Caco-2 (cell line): ENCODE measurements at regions of chr4 and their contacts with region 1.

Region 1: GRCh38 chr4:73341454-73341853 is 62.6 kb upstream of the ALB start:
- DNase-seq: peak; percentile 61 to 70
- H3K4me3 ChIP-seq: no peak overlapping the region
- H3K4me3 Mint-ChIP-seq: no peak overlapping the region
- H3K27ac Mint-ChIP-seq: no peak overlapping the region
- H3K4me1 ChIP-seq: peaks cover 22% of the 10 kb centered on the region
- H3K4me1 Mint-ChIP-seq: peaks cover 23% of the 10 kb centered on the region
- H3K27me3 ChIP-seq: no peaks in the 10 kb centered on the region
- H3K27me3 Mint-ChIP-seq: no peaks in the 10 kb centered on the region
- CTCF ChIP-seq: peak; percentile 50 to 61

Region 2: DNA sequence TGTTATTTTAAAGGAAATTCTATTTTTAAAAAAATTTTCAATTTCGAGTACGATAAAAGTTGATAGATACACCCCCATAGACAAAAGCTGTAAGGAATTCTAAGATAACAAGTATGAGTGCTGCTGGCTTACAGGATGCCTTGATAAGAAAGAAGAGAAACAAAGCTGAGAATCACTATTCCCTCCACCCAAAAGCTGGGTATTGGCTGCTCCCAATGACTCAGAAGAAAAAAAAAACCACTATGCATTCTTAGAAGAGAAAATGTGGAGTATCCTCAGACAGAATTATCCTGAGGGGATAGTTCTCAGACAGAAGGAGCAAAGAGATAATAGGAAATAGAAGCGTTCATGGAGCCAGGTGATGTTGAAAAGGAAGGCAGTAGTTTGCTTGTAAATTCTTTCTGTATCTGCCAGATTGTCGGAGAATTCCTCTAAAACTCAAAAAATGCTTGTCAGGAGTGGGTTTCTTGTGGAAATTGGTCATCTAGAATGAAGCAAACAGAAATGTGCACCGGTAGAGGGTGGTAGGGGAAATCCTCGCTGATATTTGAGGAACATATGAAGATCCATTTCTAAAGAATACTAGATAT is 555.0 kb before region 1 on chr4:
- CTCF ChIA-PET with region 1: no interaction called
- POLR2A ChIA-PET with region 1: no interaction called
- intact Hi-C with region 1: no loop called
- DNase-seq: no peak
- H3K4me3 ChIP-seq: no peak overlapping the region
- H3K4me3 Mint-ChIP-seq: no peak overlapping the region
- H3K27ac Mint-ChIP-seq: no peak overlapping the region
- H3K4me1 ChIP-seq: no peaks in the 10 kb centered on the region
- H3K4me1 Mint-ChIP-seq: no peaks in the 10 kb centered on the region
- H3K27me3 ChIP-seq: no peaks in the 10 kb centered on the region
- H3K27me3 Mint-ChIP-seq: no peaks in the 10 kb centered on the region
- CTCF ChIP-seq: no peak

Region 3: DNA sequence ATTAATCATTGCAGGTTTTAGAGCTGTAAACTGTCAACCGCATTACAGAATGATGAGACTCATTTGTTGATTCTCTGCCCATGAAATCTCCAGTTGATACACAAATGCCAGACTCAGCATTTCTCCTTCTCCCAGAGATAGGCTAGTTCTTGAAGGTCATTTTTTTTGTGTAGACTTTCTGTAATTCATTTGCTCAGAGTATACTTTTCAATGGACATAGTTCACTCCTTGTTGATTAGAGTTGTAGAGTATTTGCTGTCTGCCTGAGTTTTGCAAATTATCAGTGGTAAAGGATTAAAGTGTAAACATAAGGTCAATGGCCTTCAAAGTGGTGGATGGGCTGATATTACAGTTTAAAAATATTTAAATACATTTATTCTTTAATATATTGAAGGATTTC is 47.4 kb after region 1 on chr4:
- CTCF ChIA-PET with region 1: interaction called, 3 read pairs
- POLR2A ChIA-PET with region 1: no interaction called
- intact Hi-C with region 1: loop called (anchors 1 kb)
- DNase-seq: peak in 1 of 2 experiments; percentile 10
- H3K4me3 ChIP-seq: no peak overlapping the region
- H3K4me3 Mint-ChIP-seq: no peak overlapping the region
- H3K27ac Mint-ChIP-seq: no peak overlapping the region
- H3K4me1 ChIP-seq: peaks cover 23% of the 10 kb centered on the region; the same call in 1 of the 2 replicates
- H3K4me1 Mint-ChIP-seq: peaks cover 9% of the 10 kb centered on the region
- H3K27me3 ChIP-seq: no peaks in the 10 kb centered on the region
- H3K27me3 Mint-ChIP-seq: no peaks in the 10 kb centered on the region
- CTCF ChIP-seq: no peak

Region 4: GRCh38 chr4:73446336-73446938 is 105.0 kb after region 1 on chr4:
- CTCF ChIA-PET with region 1: interaction called, 69 read pairs
- POLR2A ChIA-PET with region 1: no interaction called
- intact Hi-C with region 1: loop called (anchors 1 kb)
- DNase-seq: peak; percentile 36 to 45
- H3K4me3 ChIP-seq: no peak overlapping the region
- H3K4me3 Mint-ChIP-seq: no peak overlapping the region
- H3K27ac Mint-ChIP-seq: no peak overlapping the region
- H3K4me1 ChIP-seq: peaks cover 21% of the 10 kb centered on the region
- H3K4me1 Mint-ChIP-seq: no peaks in the 10 kb centered on the region
- H3K27me3 ChIP-seq: no peaks in the 10 kb centered on the region
- H3K27me3 Mint-ChIP-seq: no peaks in the 10 kb centered on the region
- CTCF ChIP-seq: peak; percentile 76 to 81

Region 5: DNA sequence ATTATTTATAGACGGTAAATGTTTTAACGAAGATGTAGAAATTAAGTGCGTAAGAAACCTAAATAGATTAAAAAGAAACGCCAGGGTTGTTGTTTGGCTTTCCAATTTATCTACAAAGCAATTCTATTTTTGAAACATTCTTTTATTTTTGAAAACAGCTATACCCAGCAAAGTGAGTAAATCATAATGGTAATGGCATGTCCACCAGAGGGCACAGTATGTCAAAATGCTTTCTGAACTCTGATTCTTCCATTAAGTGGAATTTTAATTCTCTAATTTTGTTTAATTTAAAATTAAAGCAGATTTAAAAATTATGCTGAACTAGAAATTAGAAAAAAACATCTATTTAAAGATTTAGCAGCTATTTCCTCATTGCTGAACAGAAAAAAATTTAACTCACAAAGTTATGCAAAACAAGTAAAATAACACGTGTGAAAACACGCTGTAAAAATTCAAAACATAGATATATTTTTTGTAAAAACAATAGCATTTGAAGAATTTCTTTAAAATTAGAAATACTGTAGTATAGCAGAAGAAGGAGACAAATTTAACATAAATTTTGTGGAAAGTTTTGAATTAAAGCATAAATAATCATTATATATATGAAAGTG is 252.3 kb after region 1 on chr4:
- CTCF ChIA-PET with region 1: interaction called, 6 read pairs
- POLR2A ChIA-PET with region 1: no interaction called
- intact Hi-C with region 1: loop called (anchors 5 kb)
- DNase-seq: peak in 1 of 2 experiments; percentile 26
- H3K4me3 ChIP-seq: no peak overlapping the region
- H3K4me3 Mint-ChIP-seq: no peak overlapping the region
- H3K27ac Mint-ChIP-seq: no peak overlapping the region
- H3K4me1 ChIP-seq: peaks cover 7% of the 10 kb centered on the region
- H3K4me1 Mint-ChIP-seq: peaks cover 1% of the 10 kb centered on the region
- H3K27me3 ChIP-seq: no peaks in the 10 kb centered on the region
- H3K27me3 Mint-ChIP-seq: no peaks in the 10 kb centered on the region
- CTCF ChIP-seq: peak; percentile 58 to 69

Region 6: DNA sequence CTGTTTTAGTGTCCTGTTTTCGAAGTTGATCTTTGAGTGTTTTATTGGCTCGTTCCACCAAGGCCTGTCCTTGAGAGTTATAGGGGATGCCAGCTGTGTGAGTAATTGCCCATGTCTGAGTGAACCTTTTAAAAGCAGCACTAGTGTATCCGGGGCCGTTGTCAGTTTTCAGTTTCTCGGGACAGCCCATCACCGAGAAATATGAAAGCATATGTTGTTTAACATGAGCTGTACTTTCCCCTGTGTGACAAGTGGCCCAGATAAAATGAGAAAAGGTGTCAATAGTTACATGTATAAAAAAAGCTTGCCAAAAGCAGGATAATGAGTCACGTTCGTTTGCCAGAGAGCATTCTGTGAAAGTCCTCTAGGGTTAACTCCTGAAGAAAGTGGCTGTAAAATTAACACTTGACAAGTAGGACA is 327.3 kb after region 1 on chr4:
- CTCF ChIA-PET with region 1: no interaction called
- POLR2A ChIA-PET with region 1: no interaction called
- intact Hi-C with region 1: loop called (anchors 5 kb)
- DNase-seq: no peak
- H3K4me3 ChIP-seq: no peak overlapping the region
- H3K4me3 Mint-ChIP-seq: no peak overlapping the region
- H3K27ac Mint-ChIP-seq: no peak overlapping the region
- H3K4me1 ChIP-seq: no peaks in the 10 kb centered on the region
- H3K4me1 Mint-ChIP-seq: peaks cover 11% of the 10 kb centered on the region
- H3K27me3 ChIP-seq: no peaks in the 10 kb centered on the region
- H3K27me3 Mint-ChIP-seq: no peaks in the 10 kb centered on the region
- CTCF ChIP-seq: no peak